ENCODE measurements at regions of chr9 and their contacts with region 1.

Region 1: GRCh38 chr9:120842690-120843499 is at the start of gene PSMD5:
- DNase-seq: peak; percentile 100
- H3K4me3 Mint-ChIP-seq: peak within 1 kb of the TSS; percentile 100
- H3K27ac Mint-ChIP-seq: peak within 1 kb of the TSS; percentile 99
- H3K4me1 Mint-ChIP-seq: peaks cover 31% of the 10 kb centered on the region
- H3K27me3 Mint-ChIP-seq: no peaks in the 10 kb centered on the region
- CTCF ChIP-seq: no peak
- total RNA-seq, gene PSMD5: 71.0 and 91.0 TPM in 2 replicates

Region 2: GRCh38 chr9:119951090-119951489 is 891.8 kb before region 1 on chr9:
- CTCF ChIA-PET with region 1: no interaction called
- POLR2A ChIA-PET with region 1: no interaction called
- intact Hi-C with region 1: no loop called
- DNase-seq: no peak
- H3K4me3 Mint-ChIP-seq: no peak overlapping the region
- H3K27ac Mint-ChIP-seq: no peak overlapping the region
- H3K4me1 Mint-ChIP-seq: no peaks in the 10 kb centered on the region
- H3K27me3 Mint-ChIP-seq: peaks cover 19% of the 10 kb centered on the region
- CTCF ChIP-seq: no peak

Region 3: GRCh38 chr9:120868676-120869359 is 25.9 kb after region 1 on chr9:
- CTCF ChIA-PET with region 1: interaction called, 3 read pairs
- POLR2A ChIA-PET with region 1: interaction called, 28 read pairs
- intact Hi-C with region 1: no loop called
- DNase-seq: peak; percentile 99
- H3K4me3 Mint-ChIP-seq: peak overlapping the region; percentile 72
- H3K27ac Mint-ChIP-seq: peak overlapping the region; percentile 35
- H3K4me1 Mint-ChIP-seq: peaks cover 19% of the 10 kb centered on the region
- H3K27me3 Mint-ChIP-seq: no peaks in the 10 kb centered on the region
- CTCF ChIP-seq: no peak

Region 4: GRCh38 chr9:120875954-120876841 is 33.3 kb after region 1 on chr9:
- CTCF ChIA-PET with region 1: no interaction called
- POLR2A ChIA-PET with region 1: interaction called, 3 read pairs
- intact Hi-C with region 1: loop called (anchors 5 kb)
- DNase-seq: peak; percentile 93
- H3K4me3 Mint-ChIP-seq: peak overlapping the region; percentile 76
- H3K27ac Mint-ChIP-seq: peak overlapping the region; percentile 33
- H3K4me1 Mint-ChIP-seq: peaks cover 40% of the 10 kb centered on the region
- H3K27me3 Mint-ChIP-seq: no peaks in the 10 kb centered on the region
- CTCF ChIP-seq: no peak